CD4-positive, alpha-beta memory T cell (primary cell): ENCODE measurements at regions of chr5 and their contacts with region 1.

Region 1: DNA sequence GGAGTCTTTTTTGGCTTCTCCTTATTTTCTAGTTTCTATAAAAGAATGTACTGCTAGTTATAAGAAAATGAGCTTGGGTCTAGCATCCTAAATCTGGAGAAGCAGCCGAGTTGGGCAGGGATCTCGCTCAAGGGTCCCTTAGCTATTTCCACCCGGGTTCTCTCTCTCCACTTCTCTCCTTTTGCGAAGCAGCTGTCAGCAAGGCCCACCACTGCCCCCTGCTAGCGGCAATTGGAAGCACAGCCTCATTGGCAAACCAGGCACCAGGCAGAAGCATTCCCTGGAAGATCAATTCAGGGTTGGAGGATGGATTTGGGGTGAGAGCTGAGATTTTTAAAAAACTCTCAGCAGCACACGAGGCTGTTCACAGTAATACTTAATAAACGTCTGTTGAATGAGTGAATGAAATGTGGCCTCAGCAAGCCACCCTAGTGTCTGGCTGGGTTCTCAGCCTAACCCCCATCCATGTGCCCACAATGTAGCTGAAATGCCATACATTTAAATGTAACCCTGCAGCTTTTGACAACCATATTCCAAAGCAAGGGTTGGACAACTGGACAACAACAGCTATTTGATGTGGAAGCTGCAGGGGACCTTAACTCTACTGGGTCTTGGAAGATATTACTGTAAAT is 34.6 kb upstream of the TNIP1 start:
- DNase-seq: peak; percentile 62 to 73 (median 65)
- H3K4me3 ChIP-seq: no peak overlapping the region
- H3K4me3 Mint-ChIP-seq: no peak overlapping the region
- H3K27ac ChIP-seq: peak overlapping the region; percentile 8
- H3K27ac Mint-ChIP-seq: peak overlapping the region in 2 of 7 donors; percentile 36 to 60
- H3K4me1 ChIP-seq: peaks cover 11% of the 10 kb centered on the region
- H3K4me1 Mint-ChIP-seq: peaks cover 0 to 13% (median 7%) of the 10 kb centered on the region in 4 donors
- H3K27me3 ChIP-seq: no peaks in the 10 kb centered on the region
- H3K27me3 Mint-ChIP-seq: no peaks in the 10 kb centered on the region

Region 2: DNA sequence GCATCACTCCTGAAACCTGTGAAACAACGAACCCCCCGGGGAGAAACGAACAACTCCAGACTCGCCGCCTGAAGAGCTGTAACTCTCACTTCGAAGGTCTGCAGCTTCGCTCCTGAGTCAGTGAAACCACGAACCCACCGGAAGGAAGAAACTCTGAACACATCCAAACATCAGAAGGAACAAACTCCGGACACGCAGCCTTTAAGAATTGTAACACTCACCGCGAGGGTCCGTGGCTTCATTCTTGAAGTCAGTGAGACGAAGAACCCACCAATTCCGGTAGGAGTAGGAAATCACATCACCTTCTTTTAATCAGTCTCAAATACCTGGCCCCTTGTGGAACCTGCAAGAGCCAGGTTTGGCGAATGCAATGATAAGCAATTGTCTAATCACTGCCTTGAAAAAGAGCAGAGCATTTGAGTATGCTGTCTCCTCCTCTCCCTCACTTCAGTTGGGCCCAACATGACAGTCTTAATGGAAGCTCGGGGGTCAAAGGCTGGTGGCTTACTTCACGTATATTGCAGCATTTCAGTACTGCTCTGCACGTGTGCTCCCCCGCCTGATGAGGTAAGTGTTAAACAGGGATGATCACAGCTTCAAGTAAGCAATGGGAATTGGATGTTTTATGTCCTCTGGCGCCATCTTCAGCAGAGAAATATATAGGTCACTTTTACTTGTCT is 268.6 kb before region 1 on chr5:
- CTCF ChIA-PET with region 1: interaction called, 7 read pairs
- POLR2A ChIA-PET with region 1: no interaction called
- intact Hi-C with region 1: loop called (anchors 5 kb)
- DNase-seq: peak; percentile 76 to 85 (median 77)
- H3K4me3 ChIP-seq: peak overlapping the region in 1 of 2 donors; percentile 40
- H3K4me3 Mint-ChIP-seq: peak overlapping the region; percentile 83 to 91 (median 86)
- H3K27ac ChIP-seq: peak overlapping the region; percentile 50
- H3K27ac Mint-ChIP-seq: peak overlapping the region; percentile 76 to 95 (median 92)
- H3K4me1 ChIP-seq: peaks cover 8% of the 10 kb centered on the region
- H3K4me1 Mint-ChIP-seq: peaks cover 16 to 33% (median 26%) of the 10 kb centered on the region in 4 donors
- H3K27me3 ChIP-seq: no peaks in the 10 kb centered on the region
- H3K27me3 Mint-ChIP-seq: no peaks in the 10 kb centered on the region

Region 3: GRCh38 chr5:151051066-151051930 is 64.1 kb before region 1 on chr5:
- CTCF ChIA-PET with region 1: interaction called, 601 read pairs
- POLR2A ChIA-PET with region 1: interaction called, 23 read pairs
- intact Hi-C with region 1: loop called (anchors 1 kb)
- DNase-seq: peak; percentile 53 to 70 (median 59)
- H3K4me3 ChIP-seq: no peak overlapping the region
- H3K4me3 Mint-ChIP-seq: no peak overlapping the region
- H3K27ac ChIP-seq: no peak overlapping the region
- H3K27ac Mint-ChIP-seq: peak overlapping the region; percentile 24 to 85 (median 62)
- H3K4me1 ChIP-seq: no peaks in the 10 kb centered on the region
- H3K4me1 Mint-ChIP-seq: peaks cover 5 to 17% (median 6%) of the 10 kb centered on the region in 4 donors
- H3K27me3 ChIP-seq: no peaks in the 10 kb centered on the region
- H3K27me3 Mint-ChIP-seq: no peaks in the 10 kb centered on the region

Region 4: GRCh38 chr5:151080623-151081430 is 34.6 kb before region 1 on chr5 and contains the start of gene TNIP1:
- CTCF ChIA-PET with region 1: interaction called, 80 read pairs
- POLR2A ChIA-PET with region 1: interaction called, 28 read pairs
- intact Hi-C with region 1: loop called (anchors 1 kb)
- DNase-seq: peak; percentile 91 to 97 (median 93)
- H3K4me3 ChIP-seq: peak within 1 kb of the TSS; percentile 61 to 87
- H3K4me3 Mint-ChIP-seq: peak within 1 kb of the TSS; percentile 88 to 98 (median 94)
- H3K27ac ChIP-seq: peak within 1 kb of the TSS; percentile 99
- H3K27ac Mint-ChIP-seq: peak within 1 kb of the TSS; percentile 76 to 98 (median 96)
- H3K4me1 ChIP-seq: peaks cover 89% of the 10 kb centered on the region
- H3K4me1 Mint-ChIP-seq: peaks cover 69 to 94% (median 76%) of the 10 kb centered on the region in 4 donors
- H3K27me3 ChIP-seq: no peaks in the 10 kb centered on the region
- H3K27me3 Mint-ChIP-seq: no peaks in the 10 kb centered on the region
- total RNA-seq, gene TNIP1: 227 to 233 TPM

Region 5: DNA sequence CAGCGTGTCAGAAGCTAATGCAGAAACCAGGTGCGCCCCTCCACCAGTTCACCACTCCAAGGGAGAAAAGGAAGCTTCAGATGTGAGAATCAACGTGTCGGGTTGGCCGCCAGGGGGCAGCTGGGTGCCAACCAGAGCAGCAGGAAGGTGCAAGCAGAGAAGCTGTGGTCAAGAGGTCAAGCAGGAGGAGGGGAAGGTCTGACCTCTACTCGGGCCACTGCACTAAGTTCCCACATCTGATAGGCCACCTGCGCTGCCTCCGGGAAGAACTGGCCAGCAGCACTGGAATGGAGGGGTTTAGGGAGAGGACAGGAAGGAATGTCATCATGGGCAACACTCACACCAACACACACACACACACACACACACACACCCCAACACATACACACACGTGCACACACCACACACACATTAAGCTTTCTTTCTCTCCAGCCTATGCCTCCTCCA is 10.8 kb after region 1 on chr5:
- CTCF ChIA-PET with region 1: interaction called, 84 read pairs
- POLR2A ChIA-PET with region 1: no interaction called
- intact Hi-C with region 1: no loop called
- DNase-seq: peak in 4 of 5 donors; percentile 65 to 73 (median 66)
- H3K4me3 ChIP-seq: no peak overlapping the region
- H3K4me3 Mint-ChIP-seq: peak overlapping the region in 4 of 8 donors; percentile 43 to 54 (median 52)
- H3K27ac ChIP-seq: peak overlapping the region; percentile 47
- H3K27ac Mint-ChIP-seq: peak overlapping the region; percentile 78 to 96 (median 91)
- H3K4me1 ChIP-seq: peaks cover 35% of the 10 kb centered on the region
- H3K4me1 Mint-ChIP-seq: peaks cover 30 to 54% (median 43%) of the 10 kb centered on the region in 4 donors
- H3K27me3 ChIP-seq: no peaks in the 10 kb centered on the region
- H3K27me3 Mint-ChIP-seq: no peaks in the 10 kb centered on the region

Region 6: GRCh38 chr5:152622628-152623027 is 1507.2 kb after region 1 on chr5:
- CTCF ChIA-PET with region 1: no interaction called
- POLR2A ChIA-PET with region 1: no interaction called
- intact Hi-C with region 1: no loop called
- DNase-seq: no peak
- H3K4me3 ChIP-seq: no peak overlapping the region
- H3K4me3 Mint-ChIP-seq: no peak overlapping the region
- H3K27ac ChIP-seq: no peak overlapping the region
- H3K27ac Mint-ChIP-seq: no peak overlapping the region
- H3K4me1 ChIP-seq: no peaks in the 10 kb centered on the region
- H3K4me1 Mint-ChIP-seq: no peaks in the 10 kb centered on the region
- H3K27me3 ChIP-seq: no peaks in the 10 kb centered on the region
- H3K27me3 Mint-ChIP-seq: no peaks in the 10 kb centered on the region